ENCODE measurements at regions of chr2 and their contacts with region 1.

Region 1: DNA sequence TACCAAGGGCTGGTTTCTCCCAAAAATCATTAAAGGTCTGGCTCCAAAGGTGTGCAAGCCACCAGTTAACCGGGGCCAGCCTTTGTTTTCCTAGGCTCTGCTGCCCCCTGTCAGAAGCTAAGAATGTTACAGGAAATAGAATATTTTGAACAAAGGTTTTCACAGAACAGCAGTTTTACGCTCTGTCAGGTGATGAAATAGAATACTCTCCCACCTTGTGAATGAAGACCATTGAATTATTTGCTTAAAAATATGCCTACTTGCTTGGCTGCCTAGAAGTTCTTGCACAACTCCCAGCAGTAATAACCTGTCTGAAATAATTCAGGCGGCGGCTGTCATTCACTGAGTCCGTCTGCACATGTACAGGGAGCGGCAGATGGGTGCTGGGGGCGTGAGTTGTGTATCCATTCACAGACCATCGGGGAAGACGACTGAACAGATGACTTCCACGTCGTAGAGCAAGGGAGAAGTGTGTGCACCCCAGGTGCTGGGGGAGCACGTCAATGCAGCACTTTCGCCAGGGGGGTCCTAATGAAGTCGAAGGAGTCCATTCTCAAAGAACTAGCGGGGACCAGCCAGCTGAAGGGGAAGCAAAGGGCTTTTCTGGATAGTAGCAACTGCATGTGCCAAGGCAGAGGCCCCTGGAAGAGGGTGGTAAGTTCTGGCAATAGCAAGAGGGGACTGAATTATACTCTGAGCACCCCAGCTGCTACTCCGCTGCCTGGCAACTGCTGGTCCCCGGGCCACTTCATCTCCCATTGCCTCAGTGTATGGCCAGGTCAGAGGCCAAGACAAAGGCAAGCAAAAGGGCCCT is 56.1 kb downstream of the SF3B1 start:
- DNase-seq: peak; percentile 70
- CTCF ChIP-seq: peak; percentile 55

Region 2: GRCh38 chr2:196798980-196799379 is 579.7 kb before region 1 on chr2:
- in situ Hi-C with region 1: loop called (anchors 25 kb)
- DNase-seq: no peak
- CTCF ChIP-seq: no peak

Region 3: GRCh38 chr2:197184959-197185586 is 193.6 kb before region 1 on chr2:
- in situ Hi-C with region 1: loop called (anchors 10 kb)
- DNase-seq: no peak
- CTCF ChIP-seq: no peak